Activated CD4-positive, alpha-beta T cell treated with anti-CD3 and anti-CD28 coated beads, Interleukin-2, amount 10 ng/mL, durations not matched to agents 24 days and 14 days (primary cell): ENCODE measurements at regions of chr22 and their contacts with region 1.

Region 1: DNA sequence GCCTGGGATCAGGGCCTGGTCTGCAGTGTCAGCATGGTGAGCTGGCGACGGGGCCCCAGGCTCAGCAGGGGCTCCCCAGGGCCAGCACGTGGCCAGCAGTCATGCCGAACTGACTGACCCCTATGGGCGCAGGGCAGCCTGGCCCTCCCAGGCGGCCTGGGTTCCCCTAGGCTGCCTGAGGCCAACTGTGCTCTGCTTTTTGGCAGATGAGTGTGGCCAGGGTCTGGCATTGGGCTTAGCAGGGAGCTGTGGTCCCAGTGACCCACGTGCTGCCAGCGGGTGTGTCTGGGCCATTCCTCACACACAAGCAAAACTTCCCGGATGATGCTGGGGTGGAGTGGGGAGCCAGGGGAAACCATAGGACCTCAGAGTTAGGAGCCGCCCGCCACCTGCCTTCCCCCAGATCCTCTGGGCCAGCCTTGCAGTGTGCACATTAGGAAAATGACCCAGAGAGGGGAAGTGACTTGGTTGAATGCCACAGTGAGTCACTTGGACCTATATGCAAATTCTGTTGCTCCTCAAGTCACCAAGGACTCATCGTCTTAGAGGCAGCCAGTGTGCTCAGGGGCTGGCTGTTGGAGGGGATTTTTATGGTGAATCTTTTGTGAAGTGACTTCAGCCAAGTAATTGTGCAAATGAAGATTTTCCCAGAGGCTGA is 6.5 kb downstream of the ADORA2A start:
- DNase-seq: no peak
- H3K4me3 Mint-ChIP-seq: peak overlapping the region; percentile 83
- H3K27ac Mint-ChIP-seq: peak overlapping the region; percentile 100
- H3K4me1 Mint-ChIP-seq: peaks cover 65% of the 10 kb centered on the region
- H3K27me3 Mint-ChIP-seq: peaks cover 2% of the 10 kb centered on the region

Region 2: GRCh38 chr22:24270638-24271408 is 163.1 kb before region 1 on chr22 and contains the start of gene SPECC1L:
- intact Hi-C with region 1: loop called (anchors 5 kb)
- DNase-seq: peak; percentile 98
- H3K4me3 Mint-ChIP-seq: peak within 1 kb of the TSS; percentile 90
- H3K27ac Mint-ChIP-seq: peak within 1 kb of the TSS; percentile 89
- H3K4me1 Mint-ChIP-seq: peaks cover 23% of the 10 kb centered on the region
- H3K27me3 Mint-ChIP-seq: no peaks in the 10 kb centered on the region
- total RNA-seq, gene SPECC1L: 37.2 and 41.9 TPM in 2 replicates

Region 3: GRCh38 chr22:24392218-24392931 is 41.6 kb before region 1 on chr22:
- intact Hi-C with region 1: no loop called
- DNase-seq: no peak
- H3K4me3 Mint-ChIP-seq: peak overlapping the region; percentile 34
- H3K27ac Mint-ChIP-seq: no peak overlapping the region
- H3K4me1 Mint-ChIP-seq: peaks cover 23% of the 10 kb centered on the region
- H3K27me3 Mint-ChIP-seq: no peaks in the 10 kb centered on the region

Region 4: GRCh38 chr22:24402460-24403192 is 31.3 kb before region 1 on chr22:
- intact Hi-C with region 1: loop called (anchors 2 kb)
- DNase-seq: peak; percentile 56
- H3K4me3 Mint-ChIP-seq: peak overlapping the region; percentile 14
- H3K27ac Mint-ChIP-seq: peak overlapping the region; percentile 73
- H3K4me1 Mint-ChIP-seq: peaks cover 52% of the 10 kb centered on the region
- H3K27me3 Mint-ChIP-seq: no peaks in the 10 kb centered on the region

Region 5: DNA sequence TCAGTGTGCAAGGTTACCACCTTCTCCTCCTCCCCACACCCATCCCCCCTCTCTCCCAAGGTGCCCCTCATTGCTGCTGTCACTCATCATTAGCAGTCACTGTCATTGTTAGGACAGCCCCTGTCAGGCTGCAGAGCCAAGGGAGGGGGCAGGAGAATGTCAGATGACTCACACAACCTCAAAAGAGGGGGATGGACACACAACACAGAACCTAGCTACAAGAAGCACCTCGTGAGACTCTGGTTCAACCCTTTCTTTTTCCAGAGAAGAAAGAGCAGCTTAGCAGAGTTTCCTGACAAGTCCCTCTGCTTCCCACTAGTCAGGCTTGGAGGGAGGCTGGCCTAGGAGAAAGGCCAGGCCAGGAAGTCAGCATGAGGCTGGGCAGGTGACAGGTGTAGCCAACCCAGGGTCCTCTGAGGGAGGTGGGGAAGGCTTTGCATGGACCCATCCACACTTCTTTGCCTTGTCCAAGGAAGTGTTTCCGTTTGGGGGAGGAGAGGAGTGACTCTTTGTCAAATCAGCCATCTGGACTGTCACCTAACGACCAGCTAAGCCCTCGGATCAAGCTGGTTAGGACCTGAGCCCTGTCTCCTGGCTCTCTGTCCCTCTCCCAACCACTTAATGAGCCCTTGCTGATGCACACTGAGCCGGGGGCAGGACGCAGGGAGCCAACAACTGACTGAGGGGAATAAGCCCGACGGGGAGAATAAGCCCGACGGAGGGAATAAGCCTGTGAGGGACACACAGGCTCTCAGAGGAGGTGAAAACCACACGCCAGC is 11.7 kb after region 1 on chr22:
- intact Hi-C with region 1: loop called (anchors 1 kb)
- DNase-seq: no peak
- H3K4me3 Mint-ChIP-seq: no peak overlapping the region
- H3K27ac Mint-ChIP-seq: peak overlapping the region; percentile 51
- H3K4me1 Mint-ChIP-seq: peaks cover 29% of the 10 kb centered on the region
- H3K27me3 Mint-ChIP-seq: no peaks in the 10 kb centered on the region

Region 6: GRCh38 chr22:24474221-24474620 is 40.3 kb after region 1 on chr22:
- intact Hi-C with region 1: no loop called
- DNase-seq: no peak
- H3K4me3 Mint-ChIP-seq: no peak overlapping the region
- H3K27ac Mint-ChIP-seq: no peak overlapping the region
- H3K4me1 Mint-ChIP-seq: no peaks in the 10 kb centered on the region
- H3K27me3 Mint-ChIP-seq: no peaks in the 10 kb centered on the region

Region 7: GRCh38 chr22:24486501-24486921 is 52.6 kb after region 1 on chr22:
- intact Hi-C with region 1: loop called (anchors 1 kb)
- DNase-seq: peak; percentile 67
- H3K4me3 Mint-ChIP-seq: no peak overlapping the region
- H3K27ac Mint-ChIP-seq: peak overlapping the region; percentile 78
- H3K4me1 Mint-ChIP-seq: peaks cover 14% of the 10 kb centered on the region
- H3K27me3 Mint-ChIP-seq: peaks cover 10% of the 10 kb centered on the region